ENCODE measurements at regions of chr7 and their contacts with region 1.

Region 1: DNA sequence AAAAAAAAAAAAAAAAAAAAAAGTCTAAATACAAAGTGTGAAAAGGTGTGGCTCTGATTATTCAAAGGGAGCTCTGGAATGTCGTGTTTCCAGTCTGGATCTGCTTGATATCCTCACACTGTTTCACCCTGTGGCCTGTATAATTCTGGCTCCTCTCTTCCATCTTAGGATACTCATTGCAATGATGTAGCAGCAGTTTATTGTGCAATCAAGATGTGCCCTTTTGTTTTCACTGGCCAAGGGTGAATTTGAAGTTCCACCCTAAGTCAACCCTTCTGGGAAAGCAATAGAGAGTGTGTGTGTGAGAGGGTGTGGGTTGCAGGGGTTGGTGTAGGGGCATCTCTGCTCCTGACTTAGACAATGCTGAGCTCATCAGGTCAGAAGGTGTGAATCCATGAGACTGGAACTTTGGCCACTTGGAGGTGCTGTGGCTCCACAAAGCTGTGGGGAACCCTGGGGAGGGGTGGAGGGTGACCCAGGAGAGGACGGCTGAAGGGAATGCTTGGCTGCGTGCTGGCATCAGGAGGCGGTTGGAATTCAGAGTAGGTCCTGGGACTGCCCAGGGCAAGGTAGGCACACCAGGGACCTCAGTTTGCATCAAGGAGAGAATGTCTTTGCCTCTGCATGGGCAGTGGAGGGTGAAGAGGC is 117.9 kb upstream of the PRSS58 start:
- DNase-seq: peak; percentile 99 to 100
- H3K4me3 ChIP-seq: peak overlapping the region; percentile 8; the same call in 1 of the 2 replicates
- H3K27ac ChIP-seq: peak overlapping the region; percentile 87
- H3K4me1 ChIP-seq: peaks cover 54% of the 10 kb centered on the region
- H3K27me3 ChIP-seq: no peaks in the 10 kb centered on the region
- CTCF ChIP-seq: peak; percentile 97

Region 2: GRCh38 chr7:141975806-141976523 is 399.8 kb before region 1 on chr7:
- CTCF ChIA-PET with region 1: interaction called, 4 read pairs
- POLR2A ChIA-PET with region 1: no interaction called
- intact Hi-C with region 1: loop called (anchors 2 kb)
- DNase-seq: peak; percentile 44 to 86
- H3K4me3 ChIP-seq: no peak overlapping the region
- H3K27ac ChIP-seq: no peak overlapping the region
- H3K4me1 ChIP-seq: no peaks in the 10 kb centered on the region; the same call in 1 of the 2 replicates
- H3K27me3 ChIP-seq: no peaks in the 10 kb centered on the region
- CTCF ChIP-seq: peak; percentile 96

Region 3: DNA sequence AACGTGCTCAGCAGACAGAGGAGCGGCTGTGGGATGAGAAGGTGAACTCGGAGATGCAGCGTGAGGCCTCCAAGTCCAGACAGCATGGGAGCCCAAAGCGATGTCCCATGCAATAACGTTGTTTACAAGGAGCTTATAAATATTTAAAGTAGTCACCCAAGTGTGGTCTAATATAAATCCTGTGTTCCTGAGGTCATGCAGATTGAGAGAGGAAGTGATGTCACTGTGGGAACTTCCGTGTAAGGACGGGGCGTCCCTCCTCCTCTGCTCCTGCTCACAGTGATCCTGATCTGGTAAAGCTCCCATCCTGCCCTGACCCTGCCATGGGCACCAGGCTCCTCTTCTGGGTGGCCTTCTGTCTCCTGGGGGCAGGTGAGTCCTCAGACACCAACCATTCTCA is 23.2 kb before region 1 on chr7:
- CTCF ChIA-PET with region 1: interaction called, 13 read pairs
- POLR2A ChIA-PET with region 1: no interaction called
- intact Hi-C with region 1: no loop called
- DNase-seq: no peak
- H3K4me3 ChIP-seq: no peak overlapping the region
- H3K27ac ChIP-seq: no peak overlapping the region
- H3K4me1 ChIP-seq: peaks cover 16% of the 10 kb centered on the region
- H3K27me3 ChIP-seq: no peaks in the 10 kb centered on the region
- CTCF ChIP-seq: no peak

Region 4: GRCh38 chr7:142459551-142459963 is 83.8 kb after region 1 on chr7:
- CTCF ChIA-PET with region 1: interaction called, 7 read pairs
- POLR2A ChIA-PET with region 1: interaction called, 7 read pairs
- intact Hi-C with region 1: loop called (anchors 1 kb)
- DNase-seq: peak; percentile 82 to 96
- H3K4me3 ChIP-seq: no peak overlapping the region
- H3K27ac ChIP-seq: peak overlapping the region; percentile 45
- H3K4me1 ChIP-seq: peaks cover 26% of the 10 kb centered on the region
- H3K27me3 ChIP-seq: no peaks in the 10 kb centered on the region
- CTCF ChIP-seq: peak; percentile 91

Region 5: GRCh38 chr7:142535123-142535779 is 159.5 kb after region 1 on chr7:
- CTCF ChIA-PET with region 1: no interaction called
- POLR2A ChIA-PET with region 1: no interaction called
- intact Hi-C with region 1: loop called (anchors 1 kb)
- DNase-seq: peak; percentile 84 to 89
- H3K4me3 ChIP-seq: no peak overlapping the region
- H3K27ac ChIP-seq: no peak overlapping the region
- H3K4me1 ChIP-seq: peaks cover 31% of the 10 kb centered on the region
- H3K27me3 ChIP-seq: no peaks in the 10 kb centered on the region
- CTCF ChIP-seq: peak; percentile 98

Region 6: DNA sequence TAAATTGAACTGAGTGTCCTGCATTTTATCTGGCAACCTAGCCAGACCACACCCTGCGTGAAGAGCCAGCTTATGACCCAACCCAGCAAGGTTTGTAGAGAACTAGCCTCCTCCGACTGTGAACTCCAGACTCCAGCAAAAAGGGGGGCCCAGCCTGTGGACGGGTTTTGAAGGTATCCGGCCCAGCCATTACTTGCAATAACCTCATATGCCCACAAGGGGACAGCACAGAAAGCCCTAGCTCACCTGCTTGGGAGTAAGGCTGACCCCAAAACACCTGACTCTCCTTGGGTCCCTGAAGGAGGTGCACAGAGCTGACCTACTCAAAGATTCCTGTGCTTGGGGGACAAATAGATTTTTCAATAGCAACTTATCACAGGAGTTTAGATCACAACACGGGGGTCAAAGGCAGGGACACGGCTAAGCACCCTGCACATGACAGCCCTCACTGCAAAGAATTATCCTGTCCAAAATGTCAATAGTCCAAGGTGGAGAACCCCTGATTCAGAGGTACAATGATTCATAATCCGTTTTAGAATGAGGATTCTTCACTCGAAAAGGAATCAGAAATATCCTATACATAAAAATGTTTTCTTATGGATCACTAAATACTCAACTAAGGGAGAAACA is 505.2 kb after region 1 on chr7:
- CTCF ChIA-PET with region 1: no interaction called
- POLR2A ChIA-PET with region 1: no interaction called
- intact Hi-C with region 1: loop called (anchors 5 kb)
- DNase-seq: peak in 1 of 2 experiments; percentile 46
- H3K4me3 ChIP-seq: no peak overlapping the region
- H3K27ac ChIP-seq: no peak overlapping the region
- H3K4me1 ChIP-seq: peaks cover 33% of the 10 kb centered on the region
- H3K27me3 ChIP-seq: no peaks in the 10 kb centered on the region
- CTCF ChIP-seq: peak; percentile 91